ENCODE measurements at regions of chr16 and their contacts with region 1.

Region 1: GRCh38 chr16:8797364-8798173 is at the starts of genes PMM2 and TMEM186:
- DNase-seq: peak; percentile 89 to 98
- ATAC-seq: peak; percentile 95 to 98 (median 97)
- H3K4me3 ChIP-seq: peak within 1 kb of the TSS; percentile 77
- H3K4me3 Mint-ChIP-seq: peak within 1 kb of the TSS; percentile 88
- H3K27ac ChIP-seq: peak within 1 kb of the TSS; percentile 66
- H3K27ac Mint-ChIP-seq: peak within 1 kb of the TSS; percentile 88 to 96
- H3K4me1 ChIP-seq: peaks cover 20% of the 10 kb centered on the region
- H3K4me1 Mint-ChIP-seq: peaks cover 30 to 35% of the 10 kb centered on the region in 2 donors
- H3K27me3 ChIP-seq: no peaks in the 10 kb centered on the region
- H3K27me3 Mint-ChIP-seq: no peaks in the 10 kb centered on the region
- CTCF ChIP-seq: no peak
- total RNA-seq, gene PMM2: 33.4 to 37.6 (median 36.4) TPM
- total RNA-seq, gene TMEM186: 3.0 to 5.2 (median 4.1) TPM

Region 2: DNA sequence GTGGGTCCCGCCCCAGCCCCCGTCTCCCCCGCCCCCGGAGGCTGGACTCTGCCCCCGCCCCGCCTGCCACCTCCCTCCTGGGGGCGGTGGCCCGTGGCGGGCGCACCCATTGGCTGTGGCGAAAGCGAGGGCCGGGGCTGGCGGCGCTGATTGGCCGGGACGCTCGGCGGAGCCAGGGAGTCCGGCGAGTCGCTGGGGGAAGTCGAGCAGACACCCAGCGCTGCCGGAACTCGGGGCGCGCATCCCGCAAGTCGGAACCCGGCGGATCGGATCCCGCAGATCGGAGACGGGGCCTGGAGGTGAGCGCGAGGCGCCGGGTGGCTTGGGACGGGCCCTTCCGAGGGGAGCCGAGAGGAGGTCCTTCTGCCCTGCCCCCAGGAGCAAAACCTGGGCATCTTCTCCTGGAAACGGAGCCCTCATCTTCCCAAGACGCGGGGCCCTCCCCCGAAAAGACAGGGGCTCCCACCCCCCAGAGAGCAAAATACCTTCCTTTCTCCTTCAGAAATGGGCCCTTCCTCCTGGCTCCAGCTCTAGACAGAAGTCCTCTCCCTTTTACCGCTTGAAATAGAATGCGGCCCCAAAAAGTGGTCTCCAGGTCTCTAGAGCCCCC is 123.1 kb before region 1 on chr16 and contains the start of gene ABAT:
- intact Hi-C with region 1: loop called (anchors 2 kb)
- DNase-seq: peak; percentile 91 to 92
- ATAC-seq: peak; percentile 96 to 99 (median 98)
- H3K4me3 ChIP-seq: peak within 1 kb of the TSS; percentile 69
- H3K4me3 Mint-ChIP-seq: peak within 1 kb of the TSS; percentile 96
- H3K27ac ChIP-seq: peak within 1 kb of the TSS; percentile 24
- H3K27ac Mint-ChIP-seq: peak within 1 kb of the TSS; percentile 83 to 94
- H3K4me1 ChIP-seq: peaks cover 20% of the 10 kb centered on the region
- H3K4me1 Mint-ChIP-seq: peaks cover 6 to 22% of the 10 kb centered on the region in 2 donors
- H3K27me3 ChIP-seq: no peaks in the 10 kb centered on the region
- H3K27me3 Mint-ChIP-seq: no peaks in the 10 kb centered on the region
- CTCF ChIP-seq: no peak
- total RNA-seq, gene ABAT: 11.0 to 13.4 (median 11.3) TPM

Region 3: DNA sequence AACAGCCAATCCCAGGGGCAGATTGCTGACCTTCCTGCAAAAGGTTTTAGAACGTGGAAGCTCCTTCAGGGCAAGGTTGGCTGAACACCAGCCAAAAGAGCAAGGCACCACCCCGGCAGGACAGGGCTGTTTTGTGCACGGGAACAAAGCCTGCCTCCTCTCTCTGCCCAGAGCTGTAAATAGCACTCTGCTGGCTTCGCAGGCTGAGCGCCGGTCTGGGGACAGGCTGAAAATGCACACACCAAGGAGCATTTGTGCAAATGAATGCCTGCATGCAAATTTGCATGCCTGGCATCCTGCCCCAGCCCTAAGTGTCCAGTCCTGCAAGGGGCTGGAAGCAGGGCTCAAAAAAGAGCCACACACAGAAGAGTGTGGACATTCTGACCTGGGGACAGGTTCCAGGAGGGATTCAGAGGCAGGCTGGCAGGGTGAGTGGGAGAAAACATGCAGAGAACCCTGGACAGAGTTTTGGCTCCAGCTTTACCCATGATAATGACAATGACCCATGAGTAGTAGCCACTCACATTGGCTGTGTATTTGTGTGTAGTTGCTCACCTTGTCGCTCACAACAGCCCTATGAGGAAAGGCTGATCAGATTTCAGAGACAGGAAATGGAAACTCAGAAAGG is 111.5 kb before region 1 on chr16:
- intact Hi-C with region 1: no loop called
- DNase-seq: no peak
- ATAC-seq: no peak
- H3K4me3 ChIP-seq: no peak overlapping the region
- H3K4me3 Mint-ChIP-seq: no peak overlapping the region
- H3K27ac ChIP-seq: no peak overlapping the region
- H3K27ac Mint-ChIP-seq: no peak overlapping the region
- H3K4me1 ChIP-seq: no peaks in the 10 kb centered on the region
- H3K4me1 Mint-ChIP-seq: peaks cover 0 to 10% of the 10 kb centered on the region in 2 donors
- H3K27me3 ChIP-seq: no peaks in the 10 kb centered on the region
- H3K27me3 Mint-ChIP-seq: no peaks in the 10 kb centered on the region
- CTCF ChIP-seq: no peak

Region 4: GRCh38 chr16:8868416-8869211 is 71.0 kb after region 1 on chr16 and contains the start of gene CARHSP1:
- intact Hi-C with region 1: loop called (anchors 1 kb)
- DNase-seq: peak; percentile 58 to 90
- ATAC-seq: peak; percentile 81 to 91 (median 83)
- H3K4me3 ChIP-seq: peak within 1 kb of the TSS; percentile 97
- H3K4me3 Mint-ChIP-seq: peak within 1 kb of the TSS; percentile 97
- H3K27ac ChIP-seq: peak within 1 kb of the TSS; percentile 69
- H3K27ac Mint-ChIP-seq: peak within 1 kb of the TSS; percentile 84 to 87
- H3K4me1 ChIP-seq: peaks cover 45% of the 10 kb centered on the region
- H3K4me1 Mint-ChIP-seq: peaks cover 49 to 61% of the 10 kb centered on the region in 2 donors
- H3K27me3 ChIP-seq: no peaks in the 10 kb centered on the region
- H3K27me3 Mint-ChIP-seq: no peaks in the 10 kb centered on the region
- CTCF ChIP-seq: no peak
- total RNA-seq, gene CARHSP1: 59.0 to 70.0 (median 60.1) TPM

Region 5: DNA sequence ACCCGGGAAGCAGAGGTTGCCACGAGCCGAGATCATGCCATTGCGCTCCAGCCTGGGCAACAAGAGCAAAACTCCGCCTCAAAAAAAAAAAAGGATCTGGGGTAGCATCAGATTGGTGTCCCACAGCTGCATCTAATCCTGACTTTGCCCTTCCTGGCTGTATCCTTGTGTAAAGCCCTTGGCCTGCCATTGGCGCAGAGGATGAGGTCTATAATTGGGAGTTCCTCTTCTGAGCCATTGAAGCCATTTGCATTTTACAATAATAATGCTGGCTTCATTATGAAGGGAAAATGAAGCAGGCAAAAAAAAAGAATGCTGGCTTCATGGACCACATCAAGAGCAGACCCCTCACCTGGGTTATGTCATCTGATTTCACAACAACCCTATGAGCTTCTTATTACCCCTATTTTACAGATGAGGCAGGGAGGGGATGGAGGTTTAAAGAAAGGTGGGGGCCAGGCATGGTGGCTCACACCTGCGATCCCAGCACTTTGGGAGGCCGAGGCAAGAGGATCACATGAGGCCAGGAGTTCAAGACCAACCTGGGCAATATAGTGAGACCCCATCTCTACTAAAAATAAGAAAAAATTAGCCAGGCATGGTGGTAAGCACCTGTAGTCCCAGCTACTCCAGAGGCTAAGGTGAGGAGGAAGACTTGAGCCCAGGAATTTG is 83.4 kb after region 1 on chr16:
- intact Hi-C with region 1: loop called (anchors 5 kb)
- DNase-seq: no peak
- ATAC-seq: no peak
- H3K4me3 ChIP-seq: no peak overlapping the region
- H3K4me3 Mint-ChIP-seq: no peak overlapping the region
- H3K27ac ChIP-seq: no peak overlapping the region
- H3K27ac Mint-ChIP-seq: no peak overlapping the region
- H3K4me1 ChIP-seq: peaks cover 16% of the 10 kb centered on the region
- H3K4me1 Mint-ChIP-seq: peaks cover 10 to 15% of the 10 kb centered on the region in 2 donors
- H3K27me3 ChIP-seq: no peaks in the 10 kb centered on the region
- H3K27me3 Mint-ChIP-seq: peaks cover 0 to 8% of the 10 kb centered on the region in 2 donors
- CTCF ChIP-seq: no peak

Region 6: GRCh38 chr16:8963825-8964441 is 166.4 kb after region 1 on chr16 and contains the start of gene USP7:
- intact Hi-C with region 1: loop called (anchors 5 kb)
- DNase-seq: peak; percentile 91 to 96
- ATAC-seq: peak; percentile 92 to 98 (median 94)
- H3K4me3 ChIP-seq: peak within 1 kb of the TSS; percentile 67
- H3K4me3 Mint-ChIP-seq: peak within 1 kb of the TSS; percentile 96
- H3K27ac ChIP-seq: peak within 1 kb of the TSS; percentile 74
- H3K27ac Mint-ChIP-seq: peak within 1 kb of the TSS; percentile 84 to 89
- H3K4me1 ChIP-seq: peaks cover 40% of the 10 kb centered on the region
- H3K4me1 Mint-ChIP-seq: peaks cover 36 to 44% of the 10 kb centered on the region in 2 donors
- H3K27me3 ChIP-seq: no peaks in the 10 kb centered on the region
- H3K27me3 Mint-ChIP-seq: no peaks in the 10 kb centered on the region
- CTCF ChIP-seq: no peak
- total RNA-seq, gene USP7: 213 to 268 (median 236) TPM

Region 7: GRCh38 chr16:9123871-9124270 is 326.3 kb after region 1 on chr16:
- intact Hi-C with region 1: no loop called
- DNase-seq: no peak
- ATAC-seq: no peak
- H3K4me3 ChIP-seq: no peak overlapping the region
- H3K4me3 Mint-ChIP-seq: no peak overlapping the region
- H3K27ac ChIP-seq: peak overlapping the region; percentile 8
- H3K27ac Mint-ChIP-seq: peak overlapping the region; percentile 92 to 94
- H3K4me1 ChIP-seq: peaks cover 57% of the 10 kb centered on the region
- H3K4me1 Mint-ChIP-seq: peaks cover 59 to 75% of the 10 kb centered on the region in 2 donors
- H3K27me3 ChIP-seq: no peaks in the 10 kb centered on the region
- H3K27me3 Mint-ChIP-seq: no peaks in the 10 kb centered on the region
- CTCF ChIP-seq: no peak

Measured in natural killer cell (primary cell).